Prostate gland (tissue), 2 donors: ENCODE measurements at regions of chr7 and their contacts with region 1.

Region 1: DNA sequence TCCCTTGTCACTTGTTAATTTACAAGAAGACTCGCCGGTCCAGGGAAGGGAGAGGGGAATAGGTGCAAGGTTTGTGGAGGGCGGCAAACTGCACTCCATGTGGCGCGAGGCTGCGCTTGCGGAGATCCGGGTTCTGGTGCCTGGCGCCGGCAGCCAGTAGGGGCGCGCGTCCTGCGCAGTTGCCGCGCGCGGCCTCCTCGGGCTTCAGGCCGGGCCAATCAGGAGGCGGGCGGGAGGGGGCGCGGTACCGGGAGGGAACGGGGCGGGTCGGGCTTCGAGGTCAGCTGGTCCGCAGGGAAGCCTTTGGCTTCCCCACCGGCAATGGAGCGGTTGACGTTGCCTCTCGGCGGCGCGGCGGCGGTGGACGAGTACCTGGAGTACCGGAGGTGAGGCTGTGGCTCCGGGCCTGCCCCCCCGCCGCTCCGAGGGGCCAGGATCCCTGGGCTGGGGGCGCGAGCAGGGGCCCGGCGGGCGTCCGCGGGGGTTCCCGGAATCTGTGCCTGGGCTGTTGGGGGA is at the start of gene FAM221A:
- DNase-seq: peak; percentile 85
- H3K4me3 ChIP-seq: peak within 1 kb of the TSS; percentile 64 to 69
- H3K27ac ChIP-seq: peak within 1 kb of the TSS; percentile 80
- H3K4me1 ChIP-seq: no peaks in the 10 kb centered on the region
- H3K27me3 ChIP-seq: no peaks in the 10 kb centered on the region
- CTCF ChIP-seq: peak; percentile 61 to 76 (median 69)
- POLR2A ChIP-seq: peak; percentile 16
- total RNA-seq, gene FAM221A: 7.0 to 30.8 TPM

Region 2: DNA sequence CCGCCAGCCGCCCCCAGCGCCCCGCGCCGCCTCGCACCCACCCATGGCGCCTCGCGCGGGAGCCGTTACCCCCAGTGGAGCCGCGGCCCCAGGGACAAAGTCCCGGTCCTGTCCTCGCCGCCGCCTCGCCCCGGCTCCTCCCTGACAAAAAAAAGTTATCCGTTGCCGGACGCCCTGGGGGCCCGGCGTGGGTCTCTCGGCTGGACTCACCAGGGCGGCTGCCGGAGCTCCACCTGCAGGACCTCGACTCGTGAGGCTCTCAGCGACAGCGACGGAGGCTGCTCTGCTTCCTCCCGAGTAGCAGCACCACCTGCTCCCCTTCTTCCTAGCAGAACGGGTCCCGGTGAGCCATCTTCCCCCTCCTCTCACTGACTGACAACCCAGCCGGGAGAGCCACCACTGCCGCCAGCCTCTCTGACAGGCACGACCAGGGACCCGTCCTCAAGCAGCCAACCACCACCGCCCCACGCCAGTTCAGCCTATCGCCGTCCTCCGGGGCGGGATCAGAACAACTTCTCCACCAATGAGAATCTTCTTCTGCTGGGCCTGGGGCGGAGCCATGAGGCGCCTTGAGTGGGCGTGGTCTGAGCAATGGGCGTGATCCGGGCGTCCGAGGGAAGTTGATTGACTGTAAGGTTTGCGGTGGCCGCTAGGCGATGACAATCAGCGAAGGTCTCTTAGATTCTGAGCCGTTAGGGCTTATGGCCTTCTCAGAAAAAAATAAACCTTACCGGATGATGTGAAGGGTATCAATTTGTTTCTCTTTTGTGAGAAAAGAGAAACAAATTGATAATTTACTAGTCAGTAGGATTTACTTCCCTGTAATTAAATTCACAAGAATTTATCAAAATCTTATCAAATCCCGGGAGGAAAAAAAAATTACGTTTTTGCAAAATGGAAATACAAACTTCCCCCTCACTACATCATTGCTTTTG is 666.0 kb before region 1 on chr7 and contains the start of gene HYCC1:
- intact Hi-C with region 1: loop called (anchors 10 kb)
- DNase-seq: peak; percentile 99
- H3K4me3 ChIP-seq: peak within 1 kb of the TSS; percentile 77 to 87
- H3K27ac ChIP-seq: peak within 1 kb of the TSS; percentile 57 to 63
- H3K4me1 ChIP-seq: no peaks in the 10 kb centered on the region
- H3K27me3 ChIP-seq: no peaks in the 10 kb centered on the region
- CTCF ChIP-seq: peak in 3 of 4 experiments; percentile 47 to 79 (median 79)
- POLR2A ChIP-seq: peak; percentile 98
- total RNA-seq, gene HYCC1: 15.7 to 18.3 TPM

Region 3: DNA sequence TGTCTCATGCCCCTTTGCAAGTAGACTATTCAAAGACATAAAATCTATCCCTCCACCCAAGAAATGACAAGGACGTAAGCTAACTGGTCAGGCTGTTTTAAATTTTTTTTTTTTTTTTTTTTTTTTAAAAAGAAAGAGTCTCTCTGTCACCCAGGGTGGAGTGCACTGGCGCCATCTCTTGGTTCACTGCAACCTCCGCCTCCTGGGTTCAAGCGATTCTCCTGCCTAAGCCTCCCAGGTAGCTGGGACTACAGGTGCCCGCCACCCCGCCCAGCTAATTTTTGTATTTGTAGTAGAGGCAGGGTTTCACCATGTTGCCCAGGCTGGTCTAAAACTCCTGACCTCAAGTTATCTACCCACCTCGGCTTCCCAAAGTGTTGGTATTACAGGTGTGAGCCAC is 159.4 kb before region 1 on chr7:
- intact Hi-C with region 1: no loop called
- DNase-seq: no peak
- H3K4me3 ChIP-seq: no peak overlapping the region
- H3K27ac ChIP-seq: no peak overlapping the region
- H3K4me1 ChIP-seq: no peaks in the 10 kb centered on the region
- H3K27me3 ChIP-seq: no peaks in the 10 kb centered on the region
- CTCF ChIP-seq: no peak
- POLR2A ChIP-seq: no peak

Region 4: DNA sequence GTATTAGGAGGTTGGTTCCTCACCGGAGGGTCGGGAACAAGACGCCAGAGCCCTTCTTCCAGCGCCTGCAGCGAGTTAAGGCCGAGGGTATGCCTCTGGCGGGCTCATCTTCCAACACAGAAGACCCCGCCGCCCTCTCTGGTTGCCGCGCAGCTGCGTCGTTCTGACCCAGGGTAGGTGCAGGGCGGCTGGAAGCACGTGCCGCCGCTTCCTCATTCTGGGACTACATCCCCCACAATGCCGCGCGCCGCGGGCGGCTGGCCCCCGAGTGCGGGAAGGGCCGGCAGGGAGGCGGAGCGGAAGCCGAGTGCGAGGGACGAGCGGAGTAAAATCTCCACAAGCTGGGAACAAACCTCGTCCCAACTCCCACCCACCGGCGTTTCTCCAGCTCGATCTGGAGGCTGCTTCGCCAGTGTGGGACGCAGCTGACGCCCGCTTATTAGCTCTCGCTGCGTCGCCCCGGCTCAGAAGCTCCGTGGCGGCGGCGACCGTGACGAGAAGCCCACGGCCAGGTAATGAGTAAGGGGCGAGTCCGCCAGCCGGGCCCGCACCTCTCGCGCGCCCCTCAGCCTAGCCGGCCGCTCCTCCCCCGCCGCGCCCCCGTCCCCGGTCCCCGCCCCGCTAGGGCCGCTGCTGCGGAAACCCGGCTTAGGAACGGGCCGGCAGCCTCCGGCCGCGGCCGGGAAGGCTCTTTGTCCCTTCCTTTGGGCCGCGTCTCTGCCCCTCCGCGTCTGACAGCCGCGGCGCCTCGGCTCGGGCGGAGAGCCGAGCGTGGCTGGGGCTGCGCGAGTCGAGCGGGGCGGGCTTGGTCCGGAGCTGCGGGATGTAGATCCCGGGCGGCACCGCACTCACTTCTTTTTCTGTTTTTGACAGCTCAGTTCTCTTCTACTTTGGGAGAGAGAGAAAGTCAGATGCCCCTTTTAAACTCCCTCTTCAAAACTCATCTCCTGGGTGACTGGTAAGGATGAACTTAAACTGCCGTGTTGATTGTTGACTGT is 82.6 kb before region 1 on chr7 and contains the start of gene CCDC126:
- intact Hi-C with region 1: loop called (anchors 2 kb)
- DNase-seq: peak; percentile 92
- H3K4me3 ChIP-seq: peak within 1 kb of the TSS; percentile 81 to 82
- H3K27ac ChIP-seq: peak within 1 kb of the TSS; percentile 93 to 95
- H3K4me1 ChIP-seq: no peaks in the 10 kb centered on the region
- H3K27me3 ChIP-seq: no peaks in the 10 kb centered on the region
- CTCF ChIP-seq: peak in 1 of 4 experiments; percentile 9
- POLR2A ChIP-seq: peak; percentile 62
- total RNA-seq, gene CCDC126: 8.4 to 21.4 TPM

Region 5: GRCh38 chr7:23787272-23787671 is 107.3 kb after region 1 on chr7:
- intact Hi-C with region 1: no loop called
- DNase-seq: no peak
- H3K4me3 ChIP-seq: no peak overlapping the region
- H3K27ac ChIP-seq: no peak overlapping the region
- H3K4me1 ChIP-seq: no peaks in the 10 kb centered on the region
- H3K27me3 ChIP-seq: no peaks in the 10 kb centered on the region
- CTCF ChIP-seq: no peak
- POLR2A ChIP-seq: no peak

Region 6: DNA sequence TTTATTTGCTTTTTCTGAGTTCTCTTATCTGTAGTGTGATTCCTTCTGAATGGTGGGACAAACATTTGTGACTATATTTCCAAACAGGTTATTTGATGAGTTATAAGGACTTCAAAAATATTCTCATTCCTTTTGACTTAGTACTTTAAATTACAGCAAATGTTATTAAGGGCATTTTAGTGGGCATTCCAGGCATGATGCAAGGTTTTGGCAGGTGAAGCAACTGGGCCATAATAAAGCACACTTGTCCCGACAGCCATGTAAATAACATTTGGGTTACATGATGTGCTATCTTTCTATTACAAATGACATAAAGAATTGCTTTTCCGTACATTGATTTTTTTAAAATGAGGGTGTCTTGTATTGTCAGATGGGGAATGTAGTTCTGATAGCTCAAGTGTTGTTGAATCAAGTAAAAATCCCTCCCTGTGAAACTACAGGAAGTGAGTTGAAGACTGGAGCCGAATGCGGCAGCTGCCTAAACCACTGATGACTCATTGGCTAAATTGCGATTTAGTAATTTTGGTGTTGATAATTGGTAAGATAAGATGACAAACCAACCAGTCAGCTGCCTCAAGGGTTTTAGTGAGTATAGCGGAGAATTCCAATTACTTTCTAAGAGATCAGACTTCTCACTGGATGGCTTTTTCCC is 372.7 kb after region 1 on chr7:
- intact Hi-C with region 1: no loop called
- DNase-seq: no peak
- H3K4me3 ChIP-seq: no peak overlapping the region
- H3K27ac ChIP-seq: no peak overlapping the region
- H3K4me1 ChIP-seq: no peaks in the 10 kb centered on the region
- H3K27me3 ChIP-seq: peaks cover 2% of the 10 kb centered on the region
- CTCF ChIP-seq: no peak
- POLR2A ChIP-seq: no peak